B cell (primary cell): ENCODE measurements at regions of chr1 and their contacts with region 1.

Region 1: DNA sequence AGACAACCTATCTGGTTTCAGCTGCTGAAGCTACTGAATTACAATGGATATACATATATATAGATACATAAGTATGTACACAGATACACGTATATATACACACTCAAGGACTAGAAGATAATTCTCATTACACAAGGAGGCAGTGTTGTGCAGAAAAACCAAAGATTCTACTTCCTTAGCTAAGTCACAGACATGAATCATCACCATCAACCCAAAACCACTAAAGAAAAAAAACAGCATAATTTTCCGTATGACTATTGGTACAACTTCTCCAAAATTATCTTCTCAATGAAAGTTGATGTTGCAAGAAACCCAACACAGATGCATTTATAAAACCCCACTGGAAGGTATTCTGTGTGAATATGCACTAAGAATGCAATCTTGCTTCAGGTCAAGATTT is 36.8 kb upstream of the RPF1 start:
- DNase-seq: peak; percentile 80
- ATAC-seq: peak; percentile 94
- H3K4me3 ChIP-seq: no peak overlapping the region
- H3K4me3 Mint-ChIP-seq: no peak overlapping the region
- H3K27ac ChIP-seq: no peak overlapping the region
- H3K27ac Mint-ChIP-seq: no peak overlapping the region
- H3K4me1 ChIP-seq: peaks cover 18 to 23% of the 10 kb centered on the region in 2 donors
- H3K4me1 Mint-ChIP-seq: peaks cover 18% of the 10 kb centered on the region
- H3K27me3 ChIP-seq: peaks cover 0 to 4% (median 0%) of the 10 kb centered on the region in 4 experiments
- H3K27me3 Mint-ChIP-seq: peaks cover 8% of the 10 kb centered on the region
- CTCF ChIP-seq: peak; percentile 73

Region 2: DNA sequence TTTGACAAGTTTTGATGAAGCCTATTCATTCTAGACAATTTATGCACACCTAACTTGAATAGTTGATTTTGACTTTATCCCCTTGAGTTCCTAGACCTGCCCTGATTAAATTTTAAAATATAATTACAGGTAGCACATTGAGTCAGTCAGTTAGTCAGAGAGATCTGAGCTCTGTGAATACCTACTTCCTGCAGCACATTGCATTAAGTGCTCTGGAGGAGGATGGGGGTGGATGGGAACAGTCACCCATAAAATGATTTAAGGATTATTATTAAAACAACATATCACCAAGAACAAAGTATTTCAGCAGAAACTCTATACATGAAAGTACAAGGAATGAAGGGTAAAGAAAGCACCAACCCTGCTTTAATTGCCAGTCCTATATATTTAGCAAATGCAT is 25.0 kb after region 1 on chr1:
- CTCF ChIA-PET with region 1: no interaction called
- POLR2A ChIA-PET with region 1: no interaction called
- intact Hi-C with region 1: no loop called
- DNase-seq: no peak
- ATAC-seq: no peak
- H3K4me3 ChIP-seq: no peak overlapping the region
- H3K4me3 Mint-ChIP-seq: no peak overlapping the region
- H3K27ac ChIP-seq: no peak overlapping the region
- H3K27ac Mint-ChIP-seq: no peak overlapping the region
- H3K4me1 ChIP-seq: no peaks in the 10 kb centered on the region
- H3K4me1 Mint-ChIP-seq: no peaks in the 10 kb centered on the region
- H3K27me3 ChIP-seq: peaks cover 0 to 15% (median 13%) of the 10 kb centered on the region in 4 experiments
- H3K27me3 Mint-ChIP-seq: peaks cover 68% of the 10 kb centered on the region
- CTCF ChIP-seq: no peak

Region 3: GRCh38 chr1:84488107-84488506 is 45.9 kb after region 1 on chr1:
- CTCF ChIA-PET with region 1: no interaction called
- POLR2A ChIA-PET with region 1: no interaction called
- intact Hi-C with region 1: no loop called
- DNase-seq: no peak
- ATAC-seq: no peak
- H3K4me3 ChIP-seq: no peak overlapping the region
- H3K4me3 Mint-ChIP-seq: no peak overlapping the region
- H3K27ac ChIP-seq: no peak overlapping the region
- H3K27ac Mint-ChIP-seq: no peak overlapping the region
- H3K4me1 ChIP-seq: no peaks in the 10 kb centered on the region
- H3K4me1 Mint-ChIP-seq: peaks cover 14% of the 10 kb centered on the region
- H3K27me3 ChIP-seq: no peaks in the 10 kb centered on the region
- H3K27me3 Mint-ChIP-seq: no peaks in the 10 kb centered on the region
- CTCF ChIP-seq: no peak

Region 4: DNA sequence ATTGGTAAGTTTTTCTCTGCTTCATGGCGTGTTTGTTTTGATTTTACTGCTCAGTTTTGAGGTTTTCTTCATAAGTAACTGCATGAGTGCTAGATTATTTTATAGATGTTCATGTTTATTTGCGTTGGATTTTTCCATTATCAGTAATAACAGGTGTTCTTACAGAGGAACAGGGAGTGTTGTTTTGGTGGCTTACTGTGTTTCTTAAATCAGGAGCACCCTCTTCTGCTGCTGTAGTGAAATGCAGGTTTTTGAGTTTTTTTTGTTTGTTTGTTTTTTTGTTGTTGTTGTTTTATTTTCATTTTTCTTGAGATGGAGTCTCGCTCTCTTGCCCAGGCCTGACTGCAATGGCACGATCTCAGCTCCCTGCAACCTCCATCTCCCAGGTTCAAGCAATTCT is 99.4 kb after region 1 on chr1:
- CTCF ChIA-PET with region 1: interaction called, 6 read pairs
- POLR2A ChIA-PET with region 1: interaction called, 11 read pairs
- intact Hi-C with region 1: loop called (anchors 1 kb)
- DNase-seq: peak; percentile 8
- ATAC-seq: no peak
- H3K4me3 ChIP-seq: no peak overlapping the region
- H3K4me3 Mint-ChIP-seq: no peak overlapping the region
- H3K27ac ChIP-seq: no peak overlapping the region
- H3K27ac Mint-ChIP-seq: no peak overlapping the region
- H3K4me1 ChIP-seq: peaks cover 0 to 2% of the 10 kb centered on the region in 2 donors
- H3K4me1 Mint-ChIP-seq: peaks cover 13% of the 10 kb centered on the region
- H3K27me3 ChIP-seq: no peaks in the 10 kb centered on the region
- H3K27me3 Mint-ChIP-seq: no peaks in the 10 kb centered on the region
- CTCF ChIP-seq: no peak

Region 5: GRCh38 chr1:84598846-84599741 is 156.8 kb after region 1 on chr1:
- CTCF ChIA-PET with region 1: no interaction called
- POLR2A ChIA-PET with region 1: no interaction called
- intact Hi-C with region 1: no loop called
- DNase-seq: no peak
- ATAC-seq: no peak
- H3K4me3 ChIP-seq: no peak overlapping the region
- H3K4me3 Mint-ChIP-seq: no peak overlapping the region
- H3K27ac ChIP-seq: no peak overlapping the region
- H3K27ac Mint-ChIP-seq: no peak overlapping the region
- H3K4me1 ChIP-seq: no peaks in the 10 kb centered on the region
- H3K4me1 Mint-ChIP-seq: peaks cover 12% of the 10 kb centered on the region
- H3K27me3 ChIP-seq: no peaks in the 10 kb centered on the region
- H3K27me3 Mint-ChIP-seq: no peaks in the 10 kb centered on the region
- CTCF ChIP-seq: no peak

Region 6: DNA sequence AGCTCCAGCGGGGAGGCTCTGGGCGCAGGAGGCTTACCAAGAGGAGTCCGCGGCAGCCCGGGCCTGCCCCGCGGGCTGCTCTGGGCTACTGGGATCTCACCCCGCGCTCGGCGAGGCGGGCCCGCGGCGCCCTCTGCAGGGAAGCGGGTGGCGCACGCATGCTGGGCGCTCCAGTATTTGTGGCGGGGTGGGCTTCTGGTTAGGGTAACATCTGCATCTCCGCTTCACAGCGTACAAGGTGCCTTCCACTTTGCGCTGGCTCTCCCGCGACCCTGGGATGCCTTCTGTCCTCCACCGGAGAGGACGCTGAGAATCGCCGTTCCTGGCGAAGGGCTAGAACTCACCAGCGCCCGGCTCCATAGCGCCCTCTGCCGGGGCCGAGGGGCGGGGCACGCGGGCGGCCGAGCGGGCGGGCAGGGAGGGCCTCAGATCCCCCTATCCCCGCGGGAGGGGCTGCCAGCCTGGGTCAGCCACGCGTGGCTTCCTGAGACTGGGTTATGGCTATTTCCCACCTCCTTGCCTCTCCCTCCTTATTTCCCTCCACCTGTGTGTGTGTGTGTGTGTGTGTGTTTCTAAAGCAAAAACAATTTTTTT is 178.6 kb after region 1 on chr1:
- CTCF ChIA-PET with region 1: interaction called, 28 read pairs
- POLR2A ChIA-PET with region 1: no interaction called
- intact Hi-C with region 1: loop called (anchors 1 kb)
- DNase-seq: peak; percentile 90
- ATAC-seq: peak; percentile 92
- H3K4me3 ChIP-seq: peak overlapping the region in 4 of 5 experiments; percentile 59 to 84 (median 72)
- H3K4me3 Mint-ChIP-seq: peak overlapping the region; percentile 96
- H3K27ac ChIP-seq: no peak overlapping the region
- H3K27ac Mint-ChIP-seq: peak overlapping the region; percentile 69
- H3K4me1 ChIP-seq: peaks cover 0 to 4% of the 10 kb centered on the region in 2 donors
- H3K4me1 Mint-ChIP-seq: peaks cover 6% of the 10 kb centered on the region
- H3K27me3 ChIP-seq: peaks cover 0 to 5% (median 0%) of the 10 kb centered on the region in 4 experiments
- H3K27me3 Mint-ChIP-seq: peaks cover 6% of the 10 kb centered on the region
- CTCF ChIP-seq: peak; percentile 100

Region 7: GRCh38 chr1:84724128-84724860 is 282.0 kb after region 1 on chr1:
- CTCF ChIA-PET with region 1: interaction called, 8 read pairs
- POLR2A ChIA-PET with region 1: no interaction called
- intact Hi-C with region 1: loop called (anchors 1 kb)
- DNase-seq: peak; percentile 52
- ATAC-seq: peak; percentile 24
- H3K4me3 ChIP-seq: no peak overlapping the region
- H3K4me3 Mint-ChIP-seq: no peak overlapping the region
- H3K27ac ChIP-seq: no peak overlapping the region
- H3K27ac Mint-ChIP-seq: no peak overlapping the region
- H3K4me1 ChIP-seq: no peaks in the 10 kb centered on the region
- H3K4me1 Mint-ChIP-seq: no peaks in the 10 kb centered on the region
- H3K27me3 ChIP-seq: peaks cover 0 to 4% (median 0%) of the 10 kb centered on the region in 4 experiments
- H3K27me3 Mint-ChIP-seq: peaks cover 9% of the 10 kb centered on the region
- CTCF ChIP-seq: peak; percentile 70

Region 8: DNA sequence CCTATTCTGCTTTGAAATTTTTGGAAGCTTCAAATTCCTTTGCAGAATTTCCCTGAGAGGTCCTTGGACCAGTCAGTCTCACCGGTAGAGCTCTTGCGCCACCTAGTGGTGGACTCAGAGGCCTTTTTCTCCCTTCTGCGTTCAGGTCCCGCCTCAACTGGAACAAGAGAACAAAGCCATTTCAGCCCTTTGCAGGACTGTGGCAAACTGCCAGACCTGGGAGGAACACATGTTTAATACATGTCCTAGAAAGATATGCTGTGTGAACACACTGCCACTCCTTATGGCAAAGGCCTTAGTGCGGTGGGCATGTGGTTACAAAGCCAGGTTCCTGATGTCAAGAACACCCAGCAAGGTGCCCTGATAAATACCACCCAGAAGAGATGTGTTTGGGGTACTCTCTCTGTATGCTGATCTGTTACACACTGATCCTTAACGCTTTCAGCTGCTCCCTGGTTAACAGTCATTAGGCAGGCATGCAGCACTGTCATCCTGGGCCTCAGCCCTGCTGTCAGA is 330.2 kb after region 1 on chr1:
- CTCF ChIA-PET with region 1: interaction called, 18 read pairs
- POLR2A ChIA-PET with region 1: no interaction called
- intact Hi-C with region 1: loop called (anchors 1 kb)
- DNase-seq: peak; percentile 73
- ATAC-seq: peak; percentile 56
- H3K4me3 ChIP-seq: no peak overlapping the region
- H3K4me3 Mint-ChIP-seq: no peak overlapping the region
- H3K27ac ChIP-seq: no peak overlapping the region
- H3K27ac Mint-ChIP-seq: no peak overlapping the region
- H3K4me1 ChIP-seq: no peaks in the 10 kb centered on the region
- H3K4me1 Mint-ChIP-seq: no peaks in the 10 kb centered on the region
- H3K27me3 ChIP-seq: peaks cover 0 to 7% (median 3%) of the 10 kb centered on the region in 4 experiments
- H3K27me3 Mint-ChIP-seq: peaks cover 18% of the 10 kb centered on the region
- CTCF ChIP-seq: peak; percentile 94